ENCODE measurements at regions of chr10 and their contacts with region 1.

Region 1: DNA sequence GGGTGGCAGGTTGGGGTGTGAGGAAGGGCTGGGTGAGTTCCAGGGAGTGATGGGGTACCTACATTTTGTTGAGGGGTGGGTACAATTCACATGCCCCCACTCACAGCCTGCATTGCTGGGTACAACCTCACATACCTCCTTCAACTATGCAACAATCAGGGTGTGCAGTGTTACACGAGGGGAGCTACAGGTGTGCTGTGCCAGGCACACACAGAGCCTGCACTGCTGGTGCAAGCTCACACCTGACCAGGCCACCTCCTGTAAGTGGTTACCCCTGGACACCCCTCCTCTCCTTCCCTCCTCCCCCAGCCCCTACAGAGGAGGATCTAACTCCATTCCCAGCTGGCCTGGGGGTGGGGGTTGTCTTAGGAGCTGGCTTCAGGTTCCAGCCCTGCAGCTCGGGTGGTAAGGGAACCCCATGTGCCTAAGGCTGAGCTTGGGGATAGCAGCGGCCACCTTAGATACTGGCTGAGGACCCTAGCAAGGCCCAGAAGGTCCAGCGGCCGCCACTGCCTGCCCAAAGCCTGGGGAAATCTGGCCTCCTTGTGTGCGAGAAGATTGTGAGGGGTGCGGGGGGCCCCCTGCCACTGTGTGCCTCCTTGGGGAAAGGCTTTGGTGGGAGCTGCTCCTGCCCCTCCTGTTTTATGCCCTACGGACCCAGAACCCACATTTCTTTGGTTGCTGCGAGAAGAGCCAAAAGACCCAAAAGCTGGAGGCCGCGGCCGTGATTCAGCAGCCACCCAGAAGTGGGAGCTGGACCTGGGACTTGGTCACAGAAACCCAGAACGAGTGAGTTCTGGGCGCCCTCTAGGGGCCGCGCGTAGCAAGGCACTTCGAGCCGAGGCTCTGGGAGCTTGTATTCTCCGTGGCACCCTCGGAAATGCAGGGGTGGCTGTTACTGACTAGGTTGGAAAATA is 10.8 kb downstream of the TLX1 start:
- DNase-seq: peak; percentile 62 to 86 (median 80)
- ATAC-seq: peak; percentile 86
- H3K4me3 ChIP-seq: no peak overlapping the region
- H3K4me3 Mint-ChIP-seq: no peak overlapping the region
- H3K27ac ChIP-seq: no peak overlapping the region
- H3K27ac Mint-ChIP-seq: no peak overlapping the region
- H3K4me1 ChIP-seq: peaks cover 32% of the 10 kb centered on the region
- H3K4me1 Mint-ChIP-seq: peaks cover 28% of the 10 kb centered on the region
- H3K27me3 ChIP-seq: peaks cover 62 to 72% of the 10 kb centered on the region in 2 experiments
- H3K27me3 Mint-ChIP-seq: peaks cover 79% of the 10 kb centered on the region
- CTCF ChIP-seq: peak; percentile 88

Region 2: GRCh38 chr10:101042667-101043355 is 99.1 kb before region 1 on chr10:
- CTCF ChIA-PET with region 1: interaction called, 43 read pairs
- POLR2A ChIA-PET with region 1: interaction called, 5 read pairs
- intact Hi-C with region 1: loop called (anchors 1 to 2 kb)
- DNase-seq: peak; percentile 50 to 90 (median 80)
- ATAC-seq: peak; percentile 72
- H3K4me3 ChIP-seq: peak overlapping the region; percentile 66 to 71
- H3K4me3 Mint-ChIP-seq: peak overlapping the region; percentile 97
- H3K27ac ChIP-seq: peak overlapping the region; percentile 50 to 76
- H3K27ac Mint-ChIP-seq: peak overlapping the region; percentile 93
- H3K4me1 ChIP-seq: peaks cover 13% of the 10 kb centered on the region
- H3K4me1 Mint-ChIP-seq: peaks cover 20% of the 10 kb centered on the region
- H3K27me3 ChIP-seq: peaks cover 0 to 6% of the 10 kb centered on the region in 2 experiments
- H3K27me3 Mint-ChIP-seq: peaks cover 12% of the 10 kb centered on the region
- CTCF ChIP-seq: no peak

Region 3: DNA sequence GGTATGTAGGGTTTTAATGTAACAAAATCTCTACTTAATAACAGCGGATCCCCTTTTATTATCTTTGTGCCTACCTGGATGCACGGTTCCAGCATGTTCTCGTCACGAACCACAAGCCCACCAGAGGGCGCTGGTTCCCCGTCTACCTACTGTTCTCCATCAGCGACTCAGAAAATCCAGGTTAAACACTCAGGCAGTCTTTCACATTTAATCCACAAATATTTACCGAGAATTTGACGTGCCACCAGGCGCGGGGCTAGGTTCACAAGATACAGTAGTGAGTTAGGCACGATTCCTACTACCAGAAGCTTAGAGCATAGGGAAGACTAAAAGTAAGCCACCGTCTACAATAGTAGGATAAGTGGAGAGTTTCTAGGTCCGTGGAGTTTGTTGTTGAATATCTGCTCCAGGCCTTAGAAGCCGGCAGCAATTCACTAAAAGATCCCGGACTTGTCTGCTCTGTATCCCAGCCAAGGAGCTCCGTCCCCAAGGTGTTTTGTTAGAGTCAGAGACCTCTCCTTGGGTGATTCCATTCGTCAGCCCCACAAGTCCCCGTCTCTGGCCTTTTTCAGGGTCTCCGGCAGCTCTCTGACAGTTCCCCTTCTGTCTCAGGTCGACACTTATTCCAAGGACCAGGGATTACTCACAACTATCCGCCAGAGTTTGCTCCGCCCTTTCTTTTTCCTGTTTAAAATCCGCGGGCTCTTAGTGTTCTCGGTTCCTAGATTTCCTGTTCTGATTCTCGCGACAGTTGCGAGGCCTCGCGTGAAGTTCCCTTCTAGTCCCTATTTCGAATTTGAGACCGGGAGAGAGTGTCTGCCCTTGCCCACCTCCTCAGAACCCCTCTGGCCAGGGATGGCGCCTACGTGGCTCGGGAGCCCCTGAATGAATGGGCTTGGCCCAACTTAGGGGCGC is 81.6 kb before region 1 on chr10:
- CTCF ChIA-PET with region 1: interaction called, 36 read pairs
- POLR2A ChIA-PET with region 1: no interaction called
- intact Hi-C with region 1: loop called in 1 of 2 experiments (anchors 1 kb)
- DNase-seq: peak; percentile 80 to 96 (median 91)
- ATAC-seq: peak; percentile 67
- H3K4me3 ChIP-seq: peak overlapping the region; percentile 85 to 94
- H3K4me3 Mint-ChIP-seq: peak overlapping the region; percentile 98
- H3K27ac ChIP-seq: peak overlapping the region; percentile 55 to 92
- H3K27ac Mint-ChIP-seq: peak overlapping the region; percentile 91
- H3K4me1 ChIP-seq: peaks cover 27% of the 10 kb centered on the region
- H3K4me1 Mint-ChIP-seq: peaks cover 27% of the 10 kb centered on the region
- H3K27me3 ChIP-seq: peaks cover 20 to 27% of the 10 kb centered on the region in 2 experiments
- H3K27me3 Mint-ChIP-seq: peaks cover 18% of the 10 kb centered on the region
- CTCF ChIP-seq: peak; percentile 95

Region 4: GRCh38 chr10:101080933-101081931 is 60.6 kb before region 1 on chr10:
- CTCF ChIA-PET with region 1: interaction called, 479 read pairs
- POLR2A ChIA-PET with region 1: no interaction called
- intact Hi-C with region 1: no loop called
- DNase-seq: no peak
- ATAC-seq: peak; percentile 31
- H3K4me3 ChIP-seq: no peak overlapping the region
- H3K4me3 Mint-ChIP-seq: no peak overlapping the region
- H3K27ac ChIP-seq: no peak overlapping the region
- H3K27ac Mint-ChIP-seq: no peak overlapping the region
- H3K4me1 ChIP-seq: no peaks in the 10 kb centered on the region
- H3K4me1 Mint-ChIP-seq: no peaks in the 10 kb centered on the region
- H3K27me3 ChIP-seq: no peaks in the 10 kb centered on the region
- H3K27me3 Mint-ChIP-seq: peaks cover 54% of the 10 kb centered on the region
- CTCF ChIP-seq: no peak

Region 5: DNA sequence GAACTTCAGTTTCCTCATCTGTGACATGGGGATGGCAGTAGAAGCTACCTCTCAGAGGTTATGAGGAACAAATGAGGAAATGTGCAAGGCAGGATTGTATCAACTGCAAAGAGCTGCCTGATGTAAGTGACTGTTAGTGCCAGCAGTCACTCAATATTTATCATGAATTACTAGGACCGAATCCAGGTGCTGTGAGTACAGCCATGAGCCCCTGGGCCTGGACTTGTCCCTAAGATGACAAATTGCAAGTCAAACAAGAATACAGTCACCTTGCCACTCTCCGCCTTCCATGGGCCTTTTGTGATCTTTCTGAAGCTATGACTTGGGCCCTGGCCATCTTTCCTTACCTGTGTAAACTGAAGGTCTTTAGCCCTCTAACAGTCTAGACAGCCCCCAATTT is 38.4 kb before region 1 on chr10:
- CTCF ChIA-PET with region 1: interaction called, 479 read pairs
- POLR2A ChIA-PET with region 1: interaction called, 6 read pairs
- intact Hi-C with region 1: no loop called
- DNase-seq: no peak
- ATAC-seq: no peak
- H3K4me3 ChIP-seq: no peak overlapping the region
- H3K4me3 Mint-ChIP-seq: no peak overlapping the region
- H3K27ac ChIP-seq: no peak overlapping the region
- H3K27ac Mint-ChIP-seq: no peak overlapping the region
- H3K4me1 ChIP-seq: no peaks in the 10 kb centered on the region
- H3K4me1 Mint-ChIP-seq: no peaks in the 10 kb centered on the region
- H3K27me3 ChIP-seq: peaks cover 0 to 6% of the 10 kb centered on the region in 2 experiments
- H3K27me3 Mint-ChIP-seq: peaks cover 37% of the 10 kb centered on the region
- CTCF ChIP-seq: no peak

Region 6: GRCh38 chr10:101130984-101131961 is 10.6 kb before region 1 on chr10 and contains the start of gene TLX1:
- CTCF ChIA-PET with region 1: interaction called, 25 read pairs
- POLR2A ChIA-PET with region 1: interaction called, 3 read pairs
- intact Hi-C with region 1: no loop called
- DNase-seq: no peak
- ATAC-seq: peak; percentile 19
- H3K4me3 ChIP-seq: peak within 1 kb of the TSS in 1 of 2 experiments; percentile 35
- H3K4me3 Mint-ChIP-seq: peak within 1 kb of the TSS; percentile 68
- H3K27ac ChIP-seq: no peak within 1 kb of the TSS
- H3K27ac Mint-ChIP-seq: no peak within 1 kb of the TSS
- H3K4me1 ChIP-seq: peaks cover 35% of the 10 kb centered on the region
- H3K4me1 Mint-ChIP-seq: peaks cover 30% of the 10 kb centered on the region
- H3K27me3 ChIP-seq: peaks cover 36 to 47% of the 10 kb centered on the region in 2 experiments
- H3K27me3 Mint-ChIP-seq: peaks cover 65% of the 10 kb centered on the region
- CTCF ChIP-seq: no peak
- total RNA-seq, gene TLX1: not detected

Region 7: GRCh38 chr10:101161494-101162299 is 19.8 kb after region 1 on chr10:
- CTCF ChIA-PET with region 1: interaction called, 60 read pairs
- POLR2A ChIA-PET with region 1: no interaction called
- intact Hi-C with region 1: no loop called
- DNase-seq: peak; percentile 33 to 84 (median 70)
- ATAC-seq: peak; percentile 97
- H3K4me3 ChIP-seq: no peak overlapping the region
- H3K4me3 Mint-ChIP-seq: no peak overlapping the region
- H3K27ac ChIP-seq: no peak overlapping the region
- H3K27ac Mint-ChIP-seq: no peak overlapping the region
- H3K4me1 ChIP-seq: peaks cover 3% of the 10 kb centered on the region
- H3K4me1 Mint-ChIP-seq: peaks cover 5% of the 10 kb centered on the region
- H3K27me3 ChIP-seq: peaks cover 3 to 6% of the 10 kb centered on the region in 2 experiments
- H3K27me3 Mint-ChIP-seq: peaks cover 51% of the 10 kb centered on the region
- CTCF ChIP-seq: peak; percentile 90

Measured in CD8-positive, alpha-beta T cell (primary cell).